MCF 10A (cell line): ENCODE measurements at regions of chr22 and their contacts with region 1.

Region 1: DNA sequence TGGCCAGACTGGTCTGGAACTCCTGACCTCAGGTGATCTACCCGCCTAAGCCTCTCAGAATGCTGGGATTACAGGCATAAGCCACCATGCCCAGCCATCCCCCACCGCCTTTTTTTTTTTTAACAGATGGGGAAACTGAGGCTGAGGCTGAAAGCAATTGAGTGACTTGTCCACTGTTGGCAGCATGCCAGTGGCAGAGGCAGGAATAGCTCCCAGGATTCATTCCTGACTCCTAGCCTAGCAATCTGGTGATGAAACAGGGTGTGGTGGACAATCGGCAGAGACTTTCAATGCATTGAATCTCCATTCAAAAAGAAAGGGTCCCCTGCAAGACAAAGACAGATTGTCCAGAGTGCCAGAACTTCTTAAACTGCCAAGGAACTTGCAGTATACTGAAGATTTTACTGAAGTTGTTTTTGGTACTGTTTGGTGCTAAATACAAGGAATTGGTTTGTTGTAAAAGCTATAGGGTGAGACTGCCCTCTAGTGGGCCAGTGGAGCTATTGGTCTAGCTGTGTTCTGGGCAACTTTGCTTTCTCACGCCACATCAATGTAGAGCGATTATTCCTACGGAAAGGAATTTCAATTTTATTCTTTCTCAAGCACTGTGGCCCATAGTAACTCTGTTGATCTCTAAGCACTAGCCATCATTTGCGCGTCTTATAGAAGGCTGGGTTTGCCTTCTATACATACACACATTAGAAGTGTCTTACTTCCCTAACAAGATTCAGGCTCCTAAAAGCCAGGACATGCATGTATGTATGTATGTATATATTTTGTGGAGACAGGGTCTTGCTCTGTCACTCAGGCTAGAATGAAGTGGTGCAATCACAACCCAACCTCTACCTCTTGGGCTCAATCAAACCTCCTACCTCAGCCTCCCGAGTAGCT is 21.0 kb downstream of the C22orf31 start:
- DNase-seq: peak; percentile 78
- H3K4me3 Mint-ChIP-seq: no peak overlapping the region
- H3K27ac Mint-ChIP-seq: no peak overlapping the region
- H3K4me1 Mint-ChIP-seq: no peaks in the 10 kb centered on the region
- H3K27me3 Mint-ChIP-seq: no peaks in the 10 kb centered on the region
- CTCF ChIP-seq: peak; percentile 91

Region 2: GRCh38 chr22:28600546-28601143 is 440.0 kb before region 1 on chr22:
- CTCF ChIA-PET with region 1: interaction called, 30 read pairs
- POLR2A ChIA-PET with region 1: no interaction called
- intact Hi-C with region 1: loop called (anchors 1 kb)
- DNase-seq: peak; percentile 56
- H3K4me3 Mint-ChIP-seq: no peak overlapping the region
- H3K27ac Mint-ChIP-seq: no peak overlapping the region
- H3K4me1 Mint-ChIP-seq: no peaks in the 10 kb centered on the region
- H3K27me3 Mint-ChIP-seq: peaks cover 21% of the 10 kb centered on the region
- CTCF ChIP-seq: peak; percentile 41

Region 3: DNA sequence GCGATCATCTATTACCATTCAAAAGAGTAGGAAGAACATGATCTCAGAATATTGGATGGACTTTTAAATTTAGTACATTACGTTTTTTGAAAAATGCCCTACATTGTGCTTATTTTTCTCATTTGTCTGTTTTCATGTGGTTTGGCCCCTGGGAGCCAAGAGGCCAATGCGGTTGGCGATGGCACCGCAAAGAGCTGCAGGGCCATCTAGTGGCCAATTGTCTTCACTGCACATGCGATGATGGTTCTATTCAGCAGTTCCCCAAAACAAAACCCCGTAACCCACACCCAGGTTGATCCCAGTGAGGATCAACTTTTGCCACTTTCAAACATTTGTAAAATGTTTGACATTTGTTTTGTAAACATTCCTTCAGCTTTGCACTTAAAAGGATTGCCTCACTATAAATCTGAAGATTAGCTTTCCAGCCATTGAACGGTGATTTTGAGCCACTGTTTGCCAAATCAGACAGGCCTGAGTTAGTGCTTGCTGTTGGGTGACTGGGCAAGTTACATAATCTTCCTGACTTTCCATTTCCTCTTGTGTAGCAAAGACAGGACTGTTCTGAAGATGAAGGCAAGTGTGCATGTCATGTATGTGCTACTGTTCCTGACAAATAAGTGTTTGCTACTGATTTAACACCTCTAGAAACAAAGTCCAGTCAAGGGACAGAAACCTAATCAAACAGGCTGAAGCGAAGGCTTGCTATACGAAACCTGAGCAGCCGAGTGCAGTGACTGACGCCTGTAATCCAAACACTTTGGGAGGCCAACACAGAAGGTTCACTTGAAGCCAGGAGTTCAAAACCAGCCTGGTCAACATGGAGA is 211.1 kb before region 1 on chr22:
- CTCF ChIA-PET with region 1: interaction called, 22 read pairs
- POLR2A ChIA-PET with region 1: interaction called, 3 read pairs
- intact Hi-C with region 1: no loop called
- DNase-seq: peak; percentile 69
- H3K4me3 Mint-ChIP-seq: no peak overlapping the region
- H3K27ac Mint-ChIP-seq: no peak overlapping the region
- H3K4me1 Mint-ChIP-seq: no peaks in the 10 kb centered on the region
- H3K27me3 Mint-ChIP-seq: no peaks in the 10 kb centered on the region
- CTCF ChIP-seq: peak; percentile 94

Region 4: GRCh38 chr22:28855355-28856094 is 185.1 kb before region 1 on chr22:
- CTCF ChIA-PET with region 1: interaction called, 113 read pairs
- POLR2A ChIA-PET with region 1: interaction called, 11 read pairs
- intact Hi-C with region 1: loop called (anchors 1 kb)
- DNase-seq: peak; percentile 67
- H3K4me3 Mint-ChIP-seq: no peak overlapping the region
- H3K27ac Mint-ChIP-seq: no peak overlapping the region
- H3K4me1 Mint-ChIP-seq: peaks cover 7% of the 10 kb centered on the region
- H3K27me3 Mint-ChIP-seq: peaks cover 11% of the 10 kb centered on the region
- CTCF ChIP-seq: peak; percentile 89

Region 5: DNA sequence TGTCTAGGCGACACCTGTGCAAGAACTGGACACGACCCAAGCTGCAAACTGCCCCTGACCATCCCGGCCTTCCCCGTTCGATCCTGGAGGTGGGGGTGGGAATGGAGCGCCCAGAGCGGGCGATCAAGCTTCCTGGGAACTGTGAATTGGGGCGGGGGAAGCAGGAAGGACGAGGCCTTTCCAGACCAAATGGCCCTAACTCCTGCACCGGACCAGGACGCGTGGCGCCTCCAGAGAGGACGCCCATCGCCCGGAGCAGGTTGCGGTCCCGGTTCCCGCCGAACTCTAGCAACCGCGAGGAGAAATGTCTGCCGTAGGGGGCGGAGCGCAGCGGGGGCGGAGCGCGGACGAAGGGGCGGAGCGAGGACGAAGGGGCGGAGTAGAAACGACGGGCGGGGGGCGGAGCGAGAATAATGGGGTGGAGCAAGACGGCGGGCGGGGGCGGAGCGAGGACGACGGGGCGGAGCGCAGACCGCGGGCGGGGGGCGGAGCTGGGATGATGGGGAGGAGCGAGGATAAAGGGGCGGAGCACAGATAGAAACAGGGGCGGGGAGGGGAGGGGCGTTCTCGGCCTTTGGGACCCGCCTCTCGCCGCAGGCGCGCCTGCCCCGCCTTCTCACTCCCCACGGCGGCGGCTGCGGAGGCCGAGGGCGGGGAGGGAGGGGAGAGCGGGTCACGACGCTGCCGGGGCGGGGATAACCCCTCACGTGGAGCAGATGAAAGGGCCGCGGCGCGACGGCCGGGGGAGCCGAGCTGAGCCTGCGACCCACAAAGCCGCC is 157.6 kb before region 1 on chr22 and contains the start of gene ZNRF3:
- CTCF ChIA-PET with region 1: interaction called, 23 read pairs
- POLR2A ChIA-PET with region 1: interaction called, 6 read pairs
- intact Hi-C with region 1: no loop called
- DNase-seq: peak; percentile 92
- H3K4me3 Mint-ChIP-seq: peak within 1 kb of the TSS; percentile 78
- H3K27ac Mint-ChIP-seq: no peak within 1 kb of the TSS
- H3K4me1 Mint-ChIP-seq: peaks cover 12% of the 10 kb centered on the region
- H3K27me3 Mint-ChIP-seq: no peaks in the 10 kb centered on the region
- CTCF ChIP-seq: no peak
- total RNA-seq, gene ZNRF3: 7.1 and 7.9 TPM in 2 replicates

Region 6: GRCh38 chr22:29055192-29055830 is 14.7 kb after region 1 on chr22:
- CTCF ChIA-PET with region 1: interaction called, 18 read pairs
- POLR2A ChIA-PET with region 1: no interaction called
- intact Hi-C with region 1: no loop called
- DNase-seq: no peak
- H3K4me3 Mint-ChIP-seq: no peak overlapping the region
- H3K27ac Mint-ChIP-seq: no peak overlapping the region
- H3K4me1 Mint-ChIP-seq: no peaks in the 10 kb centered on the region
- H3K27me3 Mint-ChIP-seq: no peaks in the 10 kb centered on the region
- CTCF ChIP-seq: no peak

Region 7: GRCh38 chr22:29080056-29080975 is 39.7 kb after region 1 on chr22:
- CTCF ChIA-PET with region 1: no interaction called
- POLR2A ChIA-PET with region 1: no interaction called
- intact Hi-C with region 1: no loop called
- DNase-seq: peak; percentile 84
- H3K4me3 Mint-ChIP-seq: no peak overlapping the region
- H3K27ac Mint-ChIP-seq: no peak overlapping the region
- H3K4me1 Mint-ChIP-seq: peaks cover 6% of the 10 kb centered on the region
- H3K27me3 Mint-ChIP-seq: no peaks in the 10 kb centered on the region
- CTCF ChIP-seq: no peak

Region 8: GRCh38 chr22:29245637-29246385 is 205.2 kb after region 1 on chr22:
- CTCF ChIA-PET with region 1: interaction called, 18 read pairs
- POLR2A ChIA-PET with region 1: no interaction called
- intact Hi-C with region 1: loop called (anchors 1 kb)
- DNase-seq: peak; percentile 64
- H3K4me3 Mint-ChIP-seq: no peak overlapping the region
- H3K27ac Mint-ChIP-seq: no peak overlapping the region
- H3K4me1 Mint-ChIP-seq: no peaks in the 10 kb centered on the region
- H3K27me3 Mint-ChIP-seq: peaks cover 14% of the 10 kb centered on the region
- CTCF ChIP-seq: peak; percentile 95

Region 9: DNA sequence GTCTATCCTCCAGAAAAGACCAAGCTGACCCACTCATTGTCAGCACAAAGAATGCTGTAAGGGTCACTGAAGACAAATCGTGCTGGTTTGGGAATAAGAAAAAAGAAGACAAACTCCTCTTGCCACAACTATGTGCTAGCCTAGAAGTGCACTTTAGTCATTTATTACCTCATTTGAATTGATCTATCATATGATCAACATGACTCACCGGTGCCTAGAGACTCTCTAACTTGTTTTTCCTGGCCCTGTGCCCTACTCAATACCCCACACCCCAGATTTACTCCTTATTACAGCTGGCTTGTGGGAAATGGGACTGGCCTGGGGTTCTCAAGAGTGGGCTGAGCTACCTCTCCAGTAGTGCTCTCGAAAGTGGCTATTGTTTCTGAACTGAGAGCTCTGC is 1003.7 kb after region 1 on chr22:
- CTCF ChIA-PET with region 1: no interaction called
- POLR2A ChIA-PET with region 1: no interaction called
- intact Hi-C with region 1: no loop called
- DNase-seq: peak; percentile 80
- H3K4me3 Mint-ChIP-seq: no peak overlapping the region
- H3K27ac Mint-ChIP-seq: peak overlapping the region; percentile 16
- H3K4me1 Mint-ChIP-seq: peaks cover 19% of the 10 kb centered on the region
- H3K27me3 Mint-ChIP-seq: no peaks in the 10 kb centered on the region
- CTCF ChIP-seq: no peak